ENCODE measurements at regions of chr4 and their contacts with region 1.

Region 1: DNA sequence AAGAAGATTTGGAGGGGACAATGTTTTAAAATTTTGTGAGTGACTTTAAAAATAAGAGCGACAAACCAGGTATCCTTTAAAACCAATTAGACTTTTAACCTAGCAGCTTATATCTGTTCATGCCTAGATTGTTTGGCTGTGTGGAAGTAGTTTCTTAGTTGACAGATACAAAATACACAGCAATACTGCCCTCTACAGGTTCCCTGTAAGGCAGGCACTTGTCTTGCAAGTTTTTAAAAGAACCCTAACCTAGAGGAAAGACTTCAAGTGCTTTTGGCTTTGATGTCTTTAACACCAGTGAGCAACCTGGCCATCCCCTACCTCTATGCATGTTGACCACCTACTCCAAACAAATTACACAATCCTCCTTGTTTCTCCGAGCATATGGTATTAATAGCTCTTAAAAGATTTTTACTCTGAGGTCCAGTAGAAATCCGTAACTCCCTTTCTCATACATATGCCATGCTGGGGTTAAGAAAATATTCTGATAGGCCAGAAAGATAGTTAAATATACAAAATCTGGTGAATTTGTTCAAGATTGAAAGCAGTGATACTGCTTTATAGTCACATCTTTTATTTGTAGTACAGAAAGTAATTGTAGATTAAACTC is 273.0 kb downstream of the ARHGAP24 start:
- DNase-seq: no peak
- ATAC-seq: peak; percentile 78

Region 2: DNA sequence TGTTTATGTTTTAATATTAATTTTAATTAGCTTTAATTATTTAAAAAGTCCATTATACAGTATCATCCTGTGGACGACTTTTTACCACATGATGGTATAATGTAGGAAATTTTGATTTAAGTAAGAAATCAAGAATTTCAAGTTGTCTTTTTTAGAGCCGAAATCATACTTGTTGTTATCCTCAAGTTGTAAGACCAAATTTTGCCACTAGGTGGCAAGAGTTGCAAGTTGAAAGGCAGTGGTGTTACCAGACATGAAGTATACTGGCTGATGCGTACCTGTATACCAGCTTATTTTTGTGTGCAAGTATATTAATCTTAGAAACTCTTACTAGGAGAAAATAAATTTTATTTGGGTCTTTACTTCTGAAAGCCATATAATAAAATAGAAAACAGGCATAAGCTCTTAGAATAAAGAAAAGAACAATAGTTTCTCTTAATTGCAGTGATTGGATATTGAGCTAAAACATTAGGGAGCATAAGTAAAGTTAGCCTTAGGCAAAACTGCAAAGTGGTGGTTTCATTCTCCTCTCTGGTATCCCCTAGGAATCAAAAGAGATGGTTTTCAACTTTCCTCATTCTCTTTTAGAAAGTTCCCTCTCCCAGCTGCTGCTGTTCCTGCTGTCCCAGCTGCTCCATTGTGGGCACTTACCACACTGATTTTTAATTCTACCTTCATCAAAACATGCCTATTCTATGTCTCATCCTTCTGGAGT is 663.5 kb before region 1 on chr4:
- intact Hi-C with region 1: loop called (anchors 5 kb)
- DNase-seq: no peak
- ATAC-seq: no peak

Region 3: GRCh38 chr4:85147439-85148076 is 600.4 kb before region 1 on chr4:
- intact Hi-C with region 1: loop called (anchors 1 kb)
- DNase-seq: peak; percentile 84
- ATAC-seq: peak; percentile 74

Region 4: GRCh38 chr4:85370430-85371032 is 377.5 kb before region 1 on chr4:
- intact Hi-C with region 1: loop called (anchors 10 kb)
- DNase-seq: no peak
- ATAC-seq: peak; percentile 67

Region 5: GRCh38 chr4:85474818-85475630 is 273.0 kb before region 1 on chr4 and contains the start of gene ARHGAP24:
- intact Hi-C with region 1: loop called (anchors 5 kb)
- DNase-seq: peak; percentile 92
- ATAC-seq: peak; percentile 98
- total RNA-seq, gene ARHGAP24: 10.6 TPM

Region 6: GRCh38 chr4:85842540-85842939 is 94.6 kb after region 1 on chr4:
- intact Hi-C with region 1: no loop called
- DNase-seq: no peak
- ATAC-seq: peak; percentile 74

Region 7: DNA sequence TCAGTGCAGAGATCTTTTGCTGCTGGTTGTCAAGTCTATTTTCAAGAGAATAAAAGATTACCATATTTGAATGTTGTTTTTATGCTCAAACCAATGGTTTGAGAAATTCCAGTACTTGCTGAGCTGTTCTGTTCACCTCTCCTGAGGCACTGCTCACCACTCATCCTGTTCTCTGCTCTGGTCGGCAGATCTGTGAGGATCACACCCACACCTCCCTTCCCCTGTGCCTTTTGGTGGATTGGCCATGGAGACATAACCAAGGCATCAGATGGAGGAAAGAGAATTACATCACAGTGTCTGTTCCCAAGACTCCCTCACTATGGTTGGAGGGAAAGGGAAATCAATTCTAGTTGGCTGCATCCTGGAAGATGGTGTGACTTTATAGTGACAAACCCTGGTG is 118.5 kb after region 1 on chr4:
- intact Hi-C with region 1: no loop called
- DNase-seq: no peak
- ATAC-seq: no peak

Region 8: GRCh38 chr4:86043755-86044592 is 296.0 kb after region 1 on chr4:
- intact Hi-C with region 1: loop called (anchors 2 kb)
- DNase-seq: no peak
- ATAC-seq: no peak

Region 9: GRCh38 chr4:86160426-86160825 is 412.4 kb after region 1 on chr4:
- intact Hi-C with region 1: no loop called
- DNase-seq: no peak
- ATAC-seq: no peak